ENCODE measurements at regions of chrX and their contacts with region 1.

Region 1: GRCh38 chrX:45515262-45516215 is 314.9 kb upstream of the DIPK2B start:
- DNase-seq: peak; percentile 2 to 85 (median 42)

Region 2: DNA sequence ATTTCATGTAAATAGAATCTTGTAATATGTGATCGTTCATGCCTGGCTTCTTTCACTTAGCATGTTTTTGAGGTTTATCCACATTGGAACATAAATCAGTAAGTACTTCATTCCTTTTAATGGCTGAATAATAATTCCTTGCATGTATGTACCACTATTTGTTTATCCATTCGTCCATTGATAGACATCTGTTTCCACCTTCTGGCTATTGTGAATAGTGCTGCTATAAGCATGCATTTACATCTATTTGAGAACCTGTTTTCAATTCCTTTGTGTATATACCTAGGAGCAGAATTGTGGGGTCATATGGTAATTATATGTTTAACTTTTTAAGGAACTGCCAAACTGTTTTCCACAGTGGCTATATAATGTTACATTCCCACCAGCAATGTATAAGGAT is 41.9 kb after region 1 on chrX:
- intact Hi-C with region 1: no loop called
- DNase-seq: no peak

Region 3: GRCh38 chrX:45598861-45599260 is 83.3 kb after region 1 on chrX:
- intact Hi-C with region 1: no loop called
- DNase-seq: no peak

Region 4: GRCh38 chrX:45668686-45669443 is 153.3 kb after region 1 on chrX:
- intact Hi-C with region 1: no loop called
- DNase-seq: no peak

Region 5: DNA sequence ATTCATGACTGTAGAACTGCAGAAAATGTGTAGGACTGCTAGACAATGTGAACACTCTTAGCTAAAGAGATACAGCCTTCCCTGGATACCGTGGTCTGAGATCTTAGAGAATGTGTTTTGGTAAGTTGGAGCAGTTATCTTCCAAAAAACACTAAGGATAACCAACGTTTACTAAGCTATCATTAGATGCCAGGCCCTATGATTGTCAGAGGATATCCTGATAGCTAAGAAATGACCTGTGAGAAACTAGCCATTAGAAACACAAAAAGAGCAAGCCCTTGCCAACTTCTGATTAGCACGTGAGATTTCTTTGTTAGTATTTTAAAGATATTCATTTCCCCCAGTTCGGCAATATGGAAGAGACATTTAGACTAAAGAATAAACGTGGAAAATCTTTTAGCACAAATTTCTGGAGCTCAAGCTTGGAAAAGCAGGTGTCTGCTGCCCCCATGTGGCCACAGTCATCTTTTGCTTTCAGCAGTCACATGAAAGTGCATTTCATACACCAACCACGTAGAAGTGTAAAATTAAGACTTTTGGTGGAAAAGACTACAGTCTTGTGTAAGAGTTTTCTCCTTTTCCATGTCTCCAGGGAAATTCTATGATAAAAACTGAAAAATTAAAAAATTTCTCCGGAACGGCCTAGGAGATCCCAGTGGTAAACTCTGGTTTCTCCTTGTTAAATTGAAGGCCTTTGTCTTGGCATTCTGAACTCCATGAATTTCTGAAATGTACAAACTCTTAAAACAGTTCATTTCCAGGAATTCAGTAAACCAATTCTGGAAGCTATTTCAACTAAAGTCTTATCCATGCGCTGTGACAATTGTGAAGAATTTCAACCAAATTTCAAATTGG is 893.2 kb after region 1 on chrX:
- intact Hi-C with region 1: loop called (anchors 10 kb)
- DNase-seq: peak; percentile 63 to 91 (median 80)